ENCODE measurements at regions of chr19 and their contacts with region 1.

Region 1: GRCh38 chr19:18281082-18282020 is at the start of gene JUND:
- DNase-seq: peak; percentile 99 to 100 (median 99)
- ATAC-seq: peak; percentile 82 to 87
- H3K4me3 ChIP-seq: peak within 1 kb of the TSS; percentile 84
- H3K27ac ChIP-seq: peak within 1 kb of the TSS; percentile 99
- H3K4me1 ChIP-seq: peaks cover 13% of the 10 kb centered on the region
- H3K27me3 ChIP-seq: no peaks in the 10 kb centered on the region
- total RNA-seq, gene JUND: 117 to 229 (median 122) TPM

Region 2: DNA sequence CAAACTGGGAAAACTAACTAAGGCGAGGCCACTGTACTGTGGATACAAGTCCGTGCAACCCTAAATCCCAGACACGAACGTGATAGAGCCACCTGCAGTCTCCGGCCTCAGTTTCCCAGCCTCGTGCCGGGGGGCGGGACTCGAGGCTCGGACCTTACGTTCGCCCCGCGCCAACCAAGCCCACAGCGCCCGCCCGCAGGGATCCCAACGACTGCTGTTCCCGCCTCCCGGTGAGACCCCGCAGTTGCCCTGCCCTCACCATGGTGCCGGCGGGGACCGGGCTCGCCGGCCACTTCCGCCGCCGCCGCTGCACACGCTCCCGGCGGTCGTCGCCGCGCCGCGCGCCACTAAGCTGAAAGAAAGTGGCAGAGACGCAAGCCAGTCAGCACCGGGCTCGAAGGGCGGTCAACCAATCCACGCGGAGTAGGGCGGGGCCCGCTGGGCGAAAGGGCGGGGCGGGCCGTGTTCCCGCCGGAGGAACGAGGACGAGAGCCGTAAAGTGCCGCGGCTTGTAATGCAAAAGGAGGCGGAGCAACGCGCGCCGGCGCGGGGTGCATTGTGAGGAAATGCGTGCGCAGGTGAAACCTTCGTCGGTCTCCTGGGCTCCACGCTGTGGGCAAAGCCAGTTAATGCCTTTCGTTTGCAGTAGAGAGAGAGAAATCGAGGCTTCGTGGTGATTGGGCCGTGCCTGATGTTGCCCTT is 41.6 kb after region 1 on chr19 and contains the start of gene LSM4:
- intact Hi-C with region 1: loop called (anchors 2 to 5 kb)
- DNase-seq: peak; percentile 97 to 99 (median 99)
- ATAC-seq: peak; percentile 96 to 97
- H3K4me3 ChIP-seq: peak within 1 kb of the TSS; percentile 80
- H3K27ac ChIP-seq: peak within 1 kb of the TSS; percentile 93
- H3K4me1 ChIP-seq: peaks cover 6% of the 10 kb centered on the region
- H3K27me3 ChIP-seq: no peaks in the 10 kb centered on the region
- total RNA-seq, gene LSM4: 55.6 to 77.2 (median 64.8) TPM

Region 3: DNA sequence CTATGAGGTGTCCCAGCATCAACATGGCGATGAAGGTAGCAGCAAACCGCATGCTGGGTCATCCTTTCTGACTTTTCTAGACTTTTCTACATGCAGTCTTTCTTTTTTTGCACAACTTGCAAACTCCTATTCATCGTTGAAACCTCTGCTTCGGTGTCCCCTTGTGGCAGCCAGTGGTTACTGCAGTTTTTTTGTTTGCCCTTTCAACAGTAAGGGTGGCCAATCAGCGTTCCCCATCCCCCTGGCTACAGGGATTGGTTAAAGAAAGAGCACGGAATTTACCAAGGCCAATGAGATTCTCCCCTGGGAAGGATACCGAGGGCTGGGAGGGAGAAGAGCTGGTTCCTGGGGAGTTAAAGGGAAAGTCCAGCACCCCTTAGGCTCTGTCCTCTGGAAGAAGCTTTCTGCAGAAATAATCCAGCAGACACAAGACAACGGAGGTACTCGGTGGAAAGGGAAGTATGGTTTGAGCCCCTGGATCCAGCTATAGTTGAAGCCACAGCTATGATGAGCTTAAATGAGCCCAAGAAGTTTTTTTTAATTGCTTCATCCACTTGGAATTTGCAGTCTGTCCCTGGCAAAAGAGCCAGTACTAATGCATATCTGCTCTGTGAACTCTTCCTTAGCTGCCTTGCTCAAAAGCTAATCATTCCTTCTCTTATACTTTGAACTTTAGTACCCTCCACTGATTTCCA is 47.1 kb after region 1 on chr19:
- intact Hi-C with region 1: loop called (anchors 2 to 5 kb)
- DNase-seq: peak; percentile 91 to 94 (median 91)
- ATAC-seq: peak; percentile 98 to 99
- H3K4me3 ChIP-seq: peak overlapping the region; percentile 31
- H3K27ac ChIP-seq: peak overlapping the region; percentile 69
- H3K4me1 ChIP-seq: no peaks in the 10 kb centered on the region
- H3K27me3 ChIP-seq: no peaks in the 10 kb centered on the region

Region 4: GRCh38 chr19:18419195-18419698 is 137.9 kb after region 1 on chr19 and contains the start of gene SSBP4:
- intact Hi-C with region 1: loop called in 1 of 4 experiments (anchors 10 kb)
- DNase-seq: peak; percentile 77 to 93 (median 93)
- ATAC-seq: peak in 1 of 2 donors; percentile 5
- H3K4me3 ChIP-seq: peak within 1 kb of the TSS; percentile 69
- H3K27ac ChIP-seq: peak within 1 kb of the TSS; percentile 62
- H3K4me1 ChIP-seq: peaks cover 12% of the 10 kb centered on the region
- H3K27me3 ChIP-seq: no peaks in the 10 kb centered on the region
- total RNA-seq, gene SSBP4: 32.7 to 40.0 (median 37.8) TPM

Measured in right cardiac atrium (tissue), 5 donors.